ENCODE measurements at regions of chr16 and their contacts with region 1.

Region 1: DNA sequence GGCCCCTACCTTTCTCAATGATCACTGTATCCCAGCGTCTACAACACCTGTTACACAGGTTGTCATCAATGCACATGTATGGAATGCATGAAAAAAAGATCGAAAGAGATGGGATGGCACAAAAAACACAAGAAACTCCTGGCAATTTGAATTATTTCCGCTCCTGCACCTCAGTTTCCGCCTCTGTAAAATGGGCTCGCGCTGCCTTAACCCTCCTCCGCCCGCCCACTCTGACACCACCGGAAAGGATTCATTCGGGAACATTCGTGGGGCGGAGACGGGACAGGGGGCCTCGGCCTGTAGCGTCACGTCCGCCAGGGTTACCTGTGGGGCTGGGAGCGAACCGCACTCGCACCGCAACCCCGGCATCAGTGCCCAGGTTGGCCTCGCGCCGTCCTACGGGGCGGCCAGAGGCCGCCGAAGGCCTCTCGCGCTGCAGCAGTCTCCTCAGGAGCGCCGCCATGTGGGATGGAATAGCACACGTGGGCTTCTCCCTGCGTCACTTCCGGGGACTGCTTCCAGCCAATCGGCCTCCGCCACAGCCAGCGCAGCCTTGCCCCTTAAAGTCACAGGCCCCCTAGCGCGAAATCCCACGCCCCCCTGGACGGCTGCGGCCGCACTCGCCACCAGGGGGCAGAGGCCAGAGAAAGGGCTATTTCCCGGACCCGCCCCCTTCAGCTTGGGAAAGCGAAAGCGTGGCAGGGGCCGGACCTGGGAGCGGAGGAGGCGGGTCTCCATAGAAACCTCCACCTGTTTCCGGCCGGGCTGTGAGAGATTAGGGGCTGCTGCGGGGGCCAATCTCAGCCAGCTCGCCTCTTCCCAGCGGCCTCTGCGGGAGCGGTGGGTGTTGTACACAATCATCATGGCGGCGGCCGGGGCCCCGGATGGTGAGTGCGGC is at the starts of genes EARS2 and UBFD1:
- DNase-seq: peak; percentile 90 to 98 (median 95)
- ATAC-seq: peak; percentile 90
- H3K4me3 ChIP-seq: peak within 1 kb of the TSS; percentile 82 to 90
- H3K4me3 Mint-ChIP-seq: peak within 1 kb of the TSS; percentile 91
- H3K27ac ChIP-seq: peak within 1 kb of the TSS; percentile 88 to 92
- H3K27ac Mint-ChIP-seq: peak within 1 kb of the TSS; percentile 92
- H3K4me1 ChIP-seq: peaks cover 21% of the 10 kb centered on the region
- H3K4me1 Mint-ChIP-seq: peaks cover 38% of the 10 kb centered on the region
- H3K27me3 ChIP-seq: no peaks in the 10 kb centered on the region
- H3K27me3 Mint-ChIP-seq: no peaks in the 10 kb centered on the region
- CTCF ChIP-seq: peak; percentile 48
- total RNA-seq, gene EARS2: 7.2 to 8.8 TPM
- total RNA-seq, gene UBFD1: 49.0 to 51.1 TPM

Region 2: GRCh38 chr16:21952793-21953540 is 1604.2 kb before region 1 on chr16 and contains the start of gene UQCRC2:
- CTCF ChIA-PET with region 1: no interaction called
- POLR2A ChIA-PET with region 1: no interaction called
- intact Hi-C with region 1: loop called in 1 of 2 experiments (anchors 10 kb)
- DNase-seq: peak; percentile 70 to 96 (median 87)
- ATAC-seq: peak; percentile 89
- H3K4me3 ChIP-seq: peak within 1 kb of the TSS; percentile 85 to 87
- H3K4me3 Mint-ChIP-seq: peak within 1 kb of the TSS; percentile 100
- H3K27ac ChIP-seq: peak within 1 kb of the TSS; percentile 93 to 95
- H3K27ac Mint-ChIP-seq: peak within 1 kb of the TSS; percentile 98
- H3K4me1 ChIP-seq: peaks cover 36% of the 10 kb centered on the region
- H3K4me1 Mint-ChIP-seq: peaks cover 69% of the 10 kb centered on the region
- H3K27me3 ChIP-seq: no peaks in the 10 kb centered on the region
- H3K27me3 Mint-ChIP-seq: no peaks in the 10 kb centered on the region
- CTCF ChIP-seq: no peak
- total RNA-seq, gene UQCRC2: 177 to 186 TPM

Region 3: GRCh38 chr16:23452572-23453337 is 104.4 kb before region 1 on chr16 and contains the start of gene COG7:
- CTCF ChIA-PET with region 1: no interaction called
- POLR2A ChIA-PET with region 1: no interaction called
- intact Hi-C with region 1: loop called (anchors 1 kb)
- DNase-seq: peak; percentile 62 to 91 (median 83)
- ATAC-seq: peak; percentile 89
- H3K4me3 ChIP-seq: peak within 1 kb of the TSS; percentile 96 to 100
- H3K4me3 Mint-ChIP-seq: peak within 1 kb of the TSS; percentile 95
- H3K27ac ChIP-seq: peak within 1 kb of the TSS; percentile 43 to 66
- H3K27ac Mint-ChIP-seq: peak within 1 kb of the TSS; percentile 89
- H3K4me1 ChIP-seq: peaks cover 17% of the 10 kb centered on the region
- H3K4me1 Mint-ChIP-seq: peaks cover 33% of the 10 kb centered on the region
- H3K27me3 ChIP-seq: no peaks in the 10 kb centered on the region
- H3K27me3 Mint-ChIP-seq: no peaks in the 10 kb centered on the region
- CTCF ChIP-seq: no peak
- total RNA-seq, gene COG7: 13.3 to 14.7 TPM

Region 4: DNA sequence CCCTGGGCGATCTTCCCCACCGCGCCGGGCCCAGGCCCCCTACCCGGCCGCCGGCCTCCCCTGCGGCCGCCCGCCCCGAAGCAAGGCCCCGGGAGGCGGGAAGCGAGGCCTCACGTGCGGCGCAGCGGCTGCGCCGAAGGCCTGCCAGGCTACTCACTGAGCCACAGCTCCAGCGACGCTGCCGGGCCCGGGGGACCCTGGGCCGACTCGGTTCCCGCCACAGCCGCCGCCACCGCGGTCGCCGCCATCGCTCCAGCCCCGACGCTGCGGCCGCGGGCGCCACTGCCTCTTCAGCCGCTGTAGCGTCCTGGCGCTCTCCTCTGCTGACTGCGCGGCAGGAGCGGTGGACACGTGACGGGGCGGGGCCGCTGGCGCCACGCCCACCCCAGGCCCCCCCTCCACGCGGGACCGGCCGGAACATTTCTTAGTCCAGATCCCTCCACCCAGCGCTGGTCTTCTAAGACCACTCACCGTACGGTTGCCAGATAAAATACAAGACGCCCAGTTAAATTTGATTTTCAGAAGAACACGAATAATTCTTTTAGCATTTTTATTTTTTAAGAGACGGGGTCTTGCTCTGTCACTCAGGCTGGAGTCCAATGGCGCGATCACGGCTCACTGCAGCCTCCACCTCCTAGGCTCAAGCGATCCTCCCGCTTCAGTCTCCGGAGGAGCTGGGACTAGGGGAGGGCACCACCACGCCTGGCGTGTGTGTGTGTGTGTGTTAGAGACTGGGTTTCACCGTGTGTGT is 46.8 kb before region 1 on chr16 and contains the start of gene GGA2:
- CTCF ChIA-PET with region 1: no interaction called
- POLR2A ChIA-PET with region 1: interaction called, 4 read pairs
- intact Hi-C with region 1: loop called (anchors 1 kb)
- DNase-seq: peak; percentile 56 to 89 (median 77)
- ATAC-seq: peak; percentile 81
- H3K4me3 ChIP-seq: peak within 1 kb of the TSS; percentile 63 to 73
- H3K4me3 Mint-ChIP-seq: peak within 1 kb of the TSS; percentile 92
- H3K27ac ChIP-seq: peak within 1 kb of the TSS; percentile 40 to 64
- H3K27ac Mint-ChIP-seq: peak within 1 kb of the TSS; percentile 88
- H3K4me1 ChIP-seq: peaks cover 42% of the 10 kb centered on the region
- H3K4me1 Mint-ChIP-seq: peaks cover 59% of the 10 kb centered on the region
- H3K27me3 ChIP-seq: no peaks in the 10 kb centered on the region
- H3K27me3 Mint-ChIP-seq: no peaks in the 10 kb centered on the region
- CTCF ChIP-seq: no peak
- total RNA-seq, gene GGA2: 220 to 239 TPM

Region 5: DNA sequence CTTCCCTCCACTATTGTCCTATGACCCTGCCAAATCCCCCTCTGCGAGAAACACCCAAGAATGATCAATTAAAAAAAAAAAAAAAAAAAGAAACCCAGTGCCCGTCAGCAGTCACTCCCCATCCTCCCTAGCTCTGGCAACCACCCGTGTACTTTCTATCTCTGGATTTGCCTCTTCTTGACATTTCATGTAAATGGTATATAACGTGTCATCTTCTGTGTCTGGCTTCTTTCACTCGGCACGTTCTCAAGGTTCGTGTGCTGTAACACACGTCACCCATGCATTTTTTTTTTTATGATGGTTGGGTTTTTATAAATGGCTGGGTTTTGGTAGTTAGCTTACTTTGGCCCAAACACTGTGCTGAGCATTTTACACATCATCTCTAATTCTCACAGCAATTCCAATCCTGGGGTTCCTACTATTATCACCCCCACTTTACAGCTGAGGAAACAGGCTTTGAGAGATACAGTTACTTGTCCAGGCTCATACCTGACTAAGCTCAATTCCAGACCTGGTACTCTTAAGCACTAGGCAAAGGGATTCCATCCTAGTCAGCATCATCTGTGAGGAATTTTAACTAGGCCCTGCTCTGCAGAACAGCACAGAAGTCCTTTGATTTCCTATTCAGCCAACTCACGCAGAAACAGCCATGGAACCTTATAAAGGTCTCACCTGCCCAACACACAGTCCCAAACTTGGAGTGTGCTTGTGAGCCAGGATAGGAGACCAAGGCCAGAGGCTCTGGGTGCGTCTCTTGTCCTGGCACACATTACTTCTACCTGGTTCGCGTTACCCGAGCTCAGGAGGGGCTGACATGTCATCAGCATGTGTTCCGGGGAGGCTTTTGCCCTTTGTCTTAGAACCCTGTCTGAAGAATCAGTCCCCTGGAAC is 27.3 kb after region 1 on chr16:
- CTCF ChIA-PET with region 1: no interaction called
- POLR2A ChIA-PET with region 1: no interaction called
- intact Hi-C with region 1: no loop called
- DNase-seq: no peak
- ATAC-seq: no peak
- H3K4me3 ChIP-seq: no peak overlapping the region
- H3K4me3 Mint-ChIP-seq: no peak overlapping the region
- H3K27ac ChIP-seq: no peak overlapping the region
- H3K27ac Mint-ChIP-seq: no peak overlapping the region
- H3K4me1 ChIP-seq: no peaks in the 10 kb centered on the region
- H3K4me1 Mint-ChIP-seq: no peaks in the 10 kb centered on the region
- H3K27me3 ChIP-seq: no peaks in the 10 kb centered on the region
- H3K27me3 Mint-ChIP-seq: no peaks in the 10 kb centered on the region
- CTCF ChIP-seq: no peak

Region 6: DNA sequence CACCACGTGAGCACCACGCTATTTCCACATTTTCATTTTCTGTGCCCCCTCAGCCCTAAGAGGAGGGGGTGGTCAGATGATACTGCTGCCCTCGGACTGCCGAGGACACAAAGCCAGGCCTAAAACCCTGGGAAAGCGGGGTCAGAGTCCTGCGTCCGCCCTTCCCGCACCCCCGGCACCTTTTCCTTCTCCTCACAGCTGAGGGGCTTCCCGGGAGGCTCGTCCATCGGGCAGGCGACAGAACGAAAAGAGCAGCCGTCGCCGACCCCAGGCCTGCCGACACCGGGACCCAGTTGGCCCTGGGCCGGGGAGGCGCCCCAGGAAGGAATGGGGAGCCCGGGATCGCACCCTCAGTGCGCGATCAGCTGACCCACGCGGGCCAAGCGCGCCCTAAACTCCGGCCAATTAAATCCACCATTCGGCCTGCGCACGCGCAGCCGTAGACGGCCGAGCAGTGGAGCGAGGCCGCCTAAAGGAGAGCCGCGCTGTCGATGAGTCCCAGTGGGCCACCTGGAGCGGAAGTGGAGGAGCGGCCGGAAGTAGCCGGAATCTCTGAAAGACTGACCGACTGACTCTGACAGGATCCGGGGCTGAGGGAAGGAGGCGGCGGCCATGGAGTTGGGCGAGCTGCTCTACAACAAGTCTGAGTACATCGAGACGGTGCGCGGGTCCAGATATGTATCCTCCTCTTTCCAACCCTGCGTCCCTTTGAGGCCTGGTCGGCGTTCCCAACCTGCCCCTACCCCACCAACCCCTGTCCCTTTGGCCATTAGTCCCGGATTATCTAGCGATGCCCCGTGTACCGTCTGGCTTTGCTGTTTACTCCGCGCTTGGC is 84.0 kb after region 1 on chr16 and contains the starts of genes DCTN5 and PALB2:
- CTCF ChIA-PET with region 1: no interaction called
- POLR2A ChIA-PET with region 1: interaction called, 7 read pairs
- intact Hi-C with region 1: loop called (anchors 1 kb)
- DNase-seq: peak; percentile 59 to 92 (median 81)
- ATAC-seq: peak; percentile 92
- H3K4me3 ChIP-seq: peak within 1 kb of the TSS; percentile 84 to 99
- H3K4me3 Mint-ChIP-seq: peak within 1 kb of the TSS; percentile 98
- H3K27ac ChIP-seq: peak within 1 kb of the TSS; percentile 83 to 90
- H3K27ac Mint-ChIP-seq: peak within 1 kb of the TSS; percentile 97
- H3K4me1 ChIP-seq: peaks cover 22% of the 10 kb centered on the region
- H3K4me1 Mint-ChIP-seq: peaks cover 39% of the 10 kb centered on the region
- H3K27me3 ChIP-seq: no peaks in the 10 kb centered on the region
- H3K27me3 Mint-ChIP-seq: no peaks in the 10 kb centered on the region
- CTCF ChIP-seq: no peak
- total RNA-seq, gene DCTN5: 53.6 to 57.1 TPM
- total RNA-seq, gene PALB2: 5.3 to 5.6 TPM

Region 7: DNA sequence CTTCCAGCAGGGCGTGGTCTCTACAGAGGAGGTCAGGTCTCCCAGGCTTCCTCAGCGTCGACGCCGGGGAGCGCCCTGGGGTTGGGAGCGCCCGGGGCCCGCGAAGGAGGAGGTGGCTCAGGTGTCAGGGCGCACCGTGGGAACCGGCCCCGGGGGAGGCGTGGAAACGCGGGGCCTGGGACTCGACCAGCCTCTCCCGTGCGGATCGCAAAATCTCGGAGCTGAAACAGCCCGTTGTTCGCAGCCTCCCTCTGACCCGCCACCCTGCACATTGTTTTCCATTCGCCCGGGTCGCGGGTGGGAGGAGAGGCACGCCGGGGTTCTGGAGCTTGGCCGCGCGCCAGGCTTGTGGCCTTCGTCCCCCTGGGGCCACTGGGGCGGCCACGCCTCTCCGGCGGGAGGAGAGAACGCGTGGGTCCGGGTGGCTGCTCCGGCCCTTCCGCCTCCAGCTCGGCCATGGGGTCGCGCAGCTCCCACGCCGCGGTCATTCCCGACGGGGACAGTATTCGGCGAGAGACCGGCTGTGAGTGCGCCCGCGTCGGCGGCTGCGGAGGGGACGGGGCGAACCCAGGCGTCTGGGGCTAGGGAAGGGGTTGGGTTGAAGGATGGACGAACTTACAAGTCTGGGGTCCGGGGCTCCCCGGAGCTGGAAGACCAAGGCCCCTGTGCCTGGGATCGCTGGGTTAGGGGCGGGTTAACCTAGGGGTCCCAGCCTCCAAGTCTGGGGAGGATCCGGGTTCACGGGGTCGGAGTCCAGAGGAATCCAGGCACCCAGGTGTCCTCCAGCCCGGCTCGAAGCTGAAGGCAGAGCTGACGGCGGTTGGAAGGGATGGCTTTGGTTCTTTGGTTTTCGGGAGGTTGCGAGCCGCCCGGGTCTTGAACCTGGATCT is 197.7 kb after region 1 on chr16 and contains the start of gene CHP2:
- CTCF ChIA-PET with region 1: no interaction called
- POLR2A ChIA-PET with region 1: no interaction called
- intact Hi-C with region 1: no loop called
- DNase-seq: peak in 1 of 9 experiments; percentile 45
- ATAC-seq: no peak
- H3K4me3 ChIP-seq: no peak within 1 kb of the TSS
- H3K4me3 Mint-ChIP-seq: no peak within 1 kb of the TSS
- H3K27ac ChIP-seq: no peak within 1 kb of the TSS
- H3K27ac Mint-ChIP-seq: no peak within 1 kb of the TSS
- H3K4me1 ChIP-seq: peaks cover 4% of the 10 kb centered on the region
- H3K4me1 Mint-ChIP-seq: no peaks in the 10 kb centered on the region
- H3K27me3 ChIP-seq: peaks cover 11 to 19% of the 10 kb centered on the region in 2 experiments
- H3K27me3 Mint-ChIP-seq: peaks cover 49% of the 10 kb centered on the region
- CTCF ChIP-seq: no peak
- total RNA-seq, gene CHP2: not detected

Region 8: GRCh38 chr16:25014500-25015147 is 1457.5 kb after region 1 on chr16:
- CTCF ChIA-PET with region 1: no interaction called
- POLR2A ChIA-PET with region 1: no interaction called
- intact Hi-C with region 1: loop called in 1 of 2 experiments (anchors 10 kb)
- DNase-seq: peak in 6 of 9 experiments; percentile 19 to 55 (median 31)
- ATAC-seq: peak; percentile 41
- H3K4me3 ChIP-seq: peak overlapping the region; percentile 65 to 73
- H3K4me3 Mint-ChIP-seq: peak overlapping the region; percentile 93
- H3K27ac ChIP-seq: peak overlapping the region; percentile 75 to 83
- H3K27ac Mint-ChIP-seq: peak overlapping the region; percentile 96
- H3K4me1 ChIP-seq: peaks cover 51% of the 10 kb centered on the region
- H3K4me1 Mint-ChIP-seq: peaks cover 70% of the 10 kb centered on the region
- H3K27me3 ChIP-seq: no peaks in the 10 kb centered on the region
- H3K27me3 Mint-ChIP-seq: no peaks in the 10 kb centered on the region
- CTCF ChIP-seq: no peak

Measured in CD8-positive, alpha-beta T cell (primary cell).